B cell (primary cell): ENCODE measurements at regions of chr5 and their contacts with region 1.

Region 1: DNA sequence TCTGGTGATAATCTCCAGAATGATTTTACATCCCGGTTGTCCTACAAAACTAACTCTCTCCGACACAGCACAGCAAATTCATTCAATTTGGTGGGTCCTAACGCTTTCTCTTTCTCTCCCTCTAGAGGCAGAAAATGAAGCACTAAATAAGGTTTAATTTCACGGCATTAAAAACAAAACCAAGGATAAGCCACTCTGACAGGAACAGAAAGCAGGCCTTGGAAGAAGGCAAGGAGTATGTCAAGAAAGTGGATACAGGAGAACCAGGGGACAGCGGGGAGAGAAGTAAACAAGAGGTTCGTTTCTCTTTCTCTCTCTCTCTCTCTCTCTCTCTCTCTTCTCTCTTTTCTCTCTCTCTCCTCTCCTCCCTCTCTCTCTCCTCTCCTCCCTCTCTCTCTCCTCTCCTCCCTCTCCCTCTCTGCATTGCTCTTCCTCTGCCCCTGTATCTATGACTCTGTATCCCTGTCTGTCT is 49.8 kb downstream of the EBF1 start:
- DNase-seq: peak; percentile 57
- ATAC-seq: no peak
- H3K4me3 ChIP-seq: peak overlapping the region in 3 of 5 experiments; percentile 16 to 28 (median 17)
- H3K4me3 Mint-ChIP-seq: peak overlapping the region; percentile 91
- H3K27ac ChIP-seq: peak overlapping the region; percentile 74 to 80
- H3K27ac Mint-ChIP-seq: peak overlapping the region; percentile 92
- H3K4me1 ChIP-seq: peaks cover 65 to 68% of the 10 kb centered on the region in 2 donors
- H3K4me1 Mint-ChIP-seq: peaks cover 95% of the 10 kb centered on the region
- H3K27me3 ChIP-seq: no peaks in the 10 kb centered on the region
- H3K27me3 Mint-ChIP-seq: no peaks in the 10 kb centered on the region
- CTCF ChIP-seq: peak; percentile 61

Region 2: GRCh38 chr5:158880483-158881001 is 169.3 kb before region 1 on chr5:
- CTCF ChIA-PET with region 1: interaction called, 3 read pairs
- POLR2A ChIA-PET with region 1: no interaction called
- intact Hi-C with region 1: loop called (anchors 5 kb)
- DNase-seq: peak; percentile 54
- ATAC-seq: peak; percentile 25
- H3K4me3 ChIP-seq: peak overlapping the region in 2 of 5 experiments; percentile 13 to 29
- H3K4me3 Mint-ChIP-seq: peak overlapping the region; percentile 73
- H3K27ac ChIP-seq: peak overlapping the region; percentile 71 to 85
- H3K27ac Mint-ChIP-seq: peak overlapping the region; percentile 89
- H3K4me1 ChIP-seq: peaks cover 89 to 97% of the 10 kb centered on the region in 2 donors
- H3K4me1 Mint-ChIP-seq: peaks cover 92% of the 10 kb centered on the region
- H3K27me3 ChIP-seq: no peaks in the 10 kb centered on the region
- H3K27me3 Mint-ChIP-seq: no peaks in the 10 kb centered on the region
- CTCF ChIP-seq: no peak

Region 3: GRCh38 chr5:159010661-159011442 is 39.0 kb before region 1 on chr5:
- CTCF ChIA-PET with region 1: interaction called, 4 read pairs
- POLR2A ChIA-PET with region 1: no interaction called
- intact Hi-C with region 1: loop called (anchors 5 kb)
- DNase-seq: peak; percentile 69
- ATAC-seq: peak; percentile 81
- H3K4me3 ChIP-seq: peak overlapping the region; percentile 29 to 62 (median 50)
- H3K4me3 Mint-ChIP-seq: peak overlapping the region; percentile 83
- H3K27ac ChIP-seq: peak overlapping the region; percentile 79 to 89
- H3K27ac Mint-ChIP-seq: peak overlapping the region; percentile 94
- H3K4me1 ChIP-seq: peaks cover 48 to 66% of the 10 kb centered on the region in 2 donors
- H3K4me1 Mint-ChIP-seq: peaks cover 84% of the 10 kb centered on the region
- H3K27me3 ChIP-seq: no peaks in the 10 kb centered on the region
- H3K27me3 Mint-ChIP-seq: no peaks in the 10 kb centered on the region
- CTCF ChIP-seq: no peak

Region 4: DNA sequence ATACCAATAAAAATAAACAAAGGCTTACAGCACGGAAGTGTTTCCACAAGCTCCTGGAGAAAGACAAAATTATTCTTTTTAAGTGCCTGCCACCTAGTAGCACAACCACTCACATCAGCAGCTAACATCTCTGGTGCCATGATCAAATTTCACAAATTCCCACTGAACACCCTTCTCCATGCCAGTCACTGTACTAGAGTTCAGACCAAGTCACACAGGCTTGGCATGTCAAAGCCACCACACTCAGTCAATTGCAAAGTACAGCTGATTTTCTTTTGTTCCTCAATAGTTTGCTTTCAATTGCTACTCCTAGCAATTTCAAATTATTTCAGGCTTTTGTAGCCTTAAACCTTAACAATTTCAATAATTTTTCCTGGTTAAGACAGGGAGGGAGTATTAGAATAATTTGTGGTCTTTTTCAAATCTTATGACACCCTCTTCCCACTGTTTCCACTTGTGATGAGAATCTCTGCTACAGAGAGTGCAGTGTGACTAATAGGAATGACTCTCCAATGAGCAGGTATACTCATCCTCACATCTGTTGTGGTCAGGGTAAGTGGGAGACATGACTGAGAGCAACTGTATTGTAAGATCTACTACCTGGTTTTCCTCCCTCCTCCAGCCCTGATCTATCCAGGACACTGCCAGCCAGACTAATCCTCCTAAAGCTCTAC is 113.3 kb after region 1 on chr5:
- CTCF ChIA-PET with region 1: no interaction called
- POLR2A ChIA-PET with region 1: no interaction called
- intact Hi-C with region 1: no loop called
- DNase-seq: no peak
- ATAC-seq: no peak
- H3K4me3 ChIP-seq: no peak overlapping the region
- H3K4me3 Mint-ChIP-seq: no peak overlapping the region
- H3K27ac ChIP-seq: peak overlapping the region in 1 of 2 donors; percentile 14
- H3K27ac Mint-ChIP-seq: peak overlapping the region; percentile 56
- H3K4me1 ChIP-seq: no peaks in the 10 kb centered on the region
- H3K4me1 Mint-ChIP-seq: peaks cover 3% of the 10 kb centered on the region
- H3K27me3 ChIP-seq: no peaks in the 10 kb centered on the region
- H3K27me3 Mint-ChIP-seq: no peaks in the 10 kb centered on the region
- CTCF ChIP-seq: no peak

Region 5: DNA sequence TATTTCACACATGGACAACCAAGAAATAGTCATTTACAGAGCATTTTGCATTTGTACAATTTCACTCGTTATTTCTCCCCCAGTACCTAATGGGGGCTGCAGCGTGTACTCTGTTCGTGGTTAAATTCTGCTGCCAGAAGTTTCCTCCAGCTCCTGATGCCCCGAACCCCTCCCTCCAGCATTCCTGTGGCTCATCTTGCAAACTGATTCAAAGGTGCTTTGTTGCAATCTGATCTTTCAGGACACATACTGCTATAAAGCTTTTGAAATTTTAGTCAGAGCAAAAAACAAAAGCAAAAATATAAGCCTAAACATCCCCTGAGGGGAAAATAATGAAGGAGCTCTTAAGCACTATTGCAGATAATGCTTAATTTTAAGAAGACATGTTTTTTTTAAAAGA is 240.9 kb after region 1 on chr5:
- CTCF ChIA-PET with region 1: no interaction called
- POLR2A ChIA-PET with region 1: no interaction called
- intact Hi-C with region 1: no loop called
- DNase-seq: no peak
- ATAC-seq: no peak
- H3K4me3 ChIP-seq: no peak overlapping the region
- H3K4me3 Mint-ChIP-seq: no peak overlapping the region
- H3K27ac ChIP-seq: no peak overlapping the region
- H3K27ac Mint-ChIP-seq: no peak overlapping the region
- H3K4me1 ChIP-seq: no peaks in the 10 kb centered on the region
- H3K4me1 Mint-ChIP-seq: no peaks in the 10 kb centered on the region
- H3K27me3 ChIP-seq: no peaks in the 10 kb centered on the region
- H3K27me3 Mint-ChIP-seq: no peaks in the 10 kb centered on the region
- CTCF ChIP-seq: no peak